Activated T-helper 1 cell treated with anti-CD3 and anti-CD28 coated beads, Interleukin-12 subunit alpha, Interleukin-12 subunit beta, Interleukin-2, Interleukin-4 antibody, amounts not matched to agents 30 ng/mL and 10 ng/mL and 1 ng/mL, durations not matched to agents 14 hours and 24 hours and 36 hours (primary cell): ENCODE measurements at regions of chr9 and their contacts with region 1.

Region 1: DNA sequence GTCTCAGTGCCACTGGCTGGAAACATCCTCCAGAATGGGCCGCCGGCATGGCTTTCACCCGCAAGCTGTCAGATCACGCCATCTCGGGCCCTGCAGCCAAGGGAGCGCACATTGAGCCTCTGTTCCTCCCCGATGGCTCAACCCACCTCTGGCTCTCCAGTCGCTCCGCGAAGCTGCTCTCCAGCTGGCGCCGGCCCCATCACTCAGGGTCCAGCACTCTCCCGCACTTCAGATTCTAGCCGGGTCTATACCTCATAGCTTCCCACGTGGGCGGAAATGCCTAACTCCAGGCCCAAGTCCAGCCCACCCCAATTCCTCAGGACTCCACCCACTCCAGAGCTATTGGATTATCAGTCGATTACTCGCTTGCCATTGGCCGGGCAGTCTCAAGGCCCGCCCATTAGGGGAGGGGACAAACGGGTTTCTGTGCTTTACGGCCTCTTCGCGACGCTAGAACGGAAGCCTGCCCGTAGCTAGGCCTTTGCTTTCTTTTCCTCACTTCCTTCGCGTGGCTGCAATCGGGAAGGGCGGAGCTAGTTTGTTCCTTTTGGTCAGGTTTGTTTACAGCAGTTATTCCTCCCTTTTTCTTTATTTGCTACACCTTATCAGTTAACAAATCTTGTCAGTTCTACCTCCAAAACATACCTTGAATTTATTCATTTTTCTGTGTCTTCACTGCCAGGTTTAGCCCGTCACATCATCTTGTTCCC is at the start of gene NOL6:
- DNase-seq: peak; percentile 98
- H3K4me3 Mint-ChIP-seq: peak within 1 kb of the TSS; percentile 98
- H3K27ac Mint-ChIP-seq: peak within 1 kb of the TSS; percentile 96
- H3K4me1 Mint-ChIP-seq: peaks cover 20% of the 10 kb centered on the region
- H3K27me3 Mint-ChIP-seq: no peaks in the 10 kb centered on the region
- total RNA-seq, gene NOL6: 87.3 and 90.1 TPM in 2 replicates

Region 2: GRCh38 chr9:33024966-33025571 is 448.7 kb before region 1 on chr9 and contains the start of gene DNAJA1:
- intact Hi-C with region 1: loop called (anchors 2 kb)
- DNase-seq: peak; percentile 95
- H3K4me3 Mint-ChIP-seq: peak within 1 kb of the TSS; percentile 94
- H3K27ac Mint-ChIP-seq: peak within 1 kb of the TSS; percentile 98
- H3K4me1 Mint-ChIP-seq: peaks cover 68% of the 10 kb centered on the region
- H3K27me3 Mint-ChIP-seq: no peaks in the 10 kb centered on the region
- total RNA-seq, gene DNAJA1: 296 and 312 TPM in 2 replicates

Region 3: DNA sequence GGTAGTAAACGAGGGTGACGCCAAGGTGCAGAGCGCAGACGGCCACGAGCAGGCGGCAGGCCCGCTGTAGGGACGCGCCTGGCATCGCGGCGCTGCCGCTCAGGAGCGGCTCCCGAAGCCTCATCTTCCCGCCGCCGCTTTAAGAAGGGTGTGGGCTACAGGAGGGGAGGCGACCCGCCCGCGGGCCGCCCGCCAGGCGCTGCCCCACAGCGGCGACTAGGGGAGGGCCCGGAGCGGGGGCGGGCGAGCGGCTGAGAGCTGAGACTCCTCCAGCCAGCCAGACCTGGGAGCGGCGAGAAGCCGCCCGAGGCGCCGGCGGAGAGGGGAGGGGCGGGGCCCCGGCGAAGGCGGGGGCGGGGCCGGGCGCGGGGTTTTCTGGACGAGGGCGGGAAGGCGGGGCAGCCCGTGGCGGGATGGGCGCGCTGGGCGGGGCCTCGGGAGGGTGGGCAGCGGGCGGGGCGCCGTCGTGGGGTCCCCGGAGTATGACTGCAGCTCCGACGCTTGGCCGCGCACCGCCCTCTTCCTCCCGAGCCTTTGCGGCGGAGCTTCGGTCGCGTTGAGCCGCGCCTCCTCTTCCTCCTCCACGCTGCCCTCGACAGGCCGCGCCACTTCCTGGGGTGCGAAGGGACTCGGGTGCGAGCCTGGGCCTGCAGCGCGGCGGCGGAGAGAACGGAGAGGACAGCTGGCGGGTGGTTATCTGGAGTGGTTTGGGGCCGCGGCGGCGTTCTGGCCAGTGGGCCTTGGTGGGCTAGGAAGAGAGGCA is 306.6 kb before region 1 on chr9 and contains the start of gene B4GALT1:
- intact Hi-C with region 1: loop called (anchors 2 kb)
- DNase-seq: peak; percentile 91
- H3K4me3 Mint-ChIP-seq: peak within 1 kb of the TSS; percentile 96
- H3K27ac Mint-ChIP-seq: peak within 1 kb of the TSS; percentile 98
- H3K4me1 Mint-ChIP-seq: peaks cover 71% of the 10 kb centered on the region
- H3K27me3 Mint-ChIP-seq: no peaks in the 10 kb centered on the region
- total RNA-seq, gene B4GALT1: 64.4 and 66.5 TPM in 2 replicates

Region 4: DNA sequence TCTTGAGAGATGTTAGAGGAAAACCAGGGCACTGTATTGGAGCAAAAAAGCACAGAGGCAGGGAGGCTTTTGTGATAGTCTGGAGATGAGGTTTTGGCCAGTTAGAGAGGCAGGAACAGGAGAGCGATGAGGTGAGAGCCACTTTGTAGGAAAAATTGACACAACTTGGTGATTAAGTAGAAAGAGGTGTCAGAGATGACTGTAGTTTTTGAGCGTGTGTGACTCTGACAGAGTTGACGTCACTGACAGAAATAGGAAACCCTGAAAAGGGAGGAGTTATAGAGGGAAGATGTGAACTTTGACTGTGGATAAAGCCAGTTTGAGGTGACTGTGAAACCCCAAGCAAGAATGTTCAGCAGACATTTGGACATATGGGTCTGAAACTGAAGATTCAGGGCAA is 167.8 kb before region 1 on chr9:
- intact Hi-C with region 1: loop called (anchors 1 kb)
- DNase-seq: peak; percentile 42
- H3K4me3 Mint-ChIP-seq: no peak overlapping the region
- H3K27ac Mint-ChIP-seq: no peak overlapping the region
- H3K4me1 Mint-ChIP-seq: peaks cover 9% of the 10 kb centered on the region
- H3K27me3 Mint-ChIP-seq: no peaks in the 10 kb centered on the region

Region 5: GRCh38 chr9:33430942-33431341 is 42.9 kb before region 1 on chr9:
- intact Hi-C with region 1: no loop called
- DNase-seq: no peak
- H3K4me3 Mint-ChIP-seq: no peak overlapping the region
- H3K27ac Mint-ChIP-seq: no peak overlapping the region
- H3K4me1 Mint-ChIP-seq: peaks cover 20% of the 10 kb centered on the region
- H3K27me3 Mint-ChIP-seq: no peaks in the 10 kb centered on the region

Region 6: GRCh38 chr9:33446946-33447798 is 26.6 kb before region 1 on chr9 and contains the start of gene AQP3:
- intact Hi-C with region 1: loop called (anchors 1 kb)
- DNase-seq: peak; percentile 72
- H3K4me3 Mint-ChIP-seq: peak within 1 kb of the TSS; percentile 93
- H3K27ac Mint-ChIP-seq: peak within 1 kb of the TSS; percentile 90
- H3K4me1 Mint-ChIP-seq: peaks cover 40% of the 10 kb centered on the region
- H3K27me3 Mint-ChIP-seq: no peaks in the 10 kb centered on the region
- total RNA-seq, gene AQP3: 3.4 and 6.1 TPM in 2 replicates

Region 7: DNA sequence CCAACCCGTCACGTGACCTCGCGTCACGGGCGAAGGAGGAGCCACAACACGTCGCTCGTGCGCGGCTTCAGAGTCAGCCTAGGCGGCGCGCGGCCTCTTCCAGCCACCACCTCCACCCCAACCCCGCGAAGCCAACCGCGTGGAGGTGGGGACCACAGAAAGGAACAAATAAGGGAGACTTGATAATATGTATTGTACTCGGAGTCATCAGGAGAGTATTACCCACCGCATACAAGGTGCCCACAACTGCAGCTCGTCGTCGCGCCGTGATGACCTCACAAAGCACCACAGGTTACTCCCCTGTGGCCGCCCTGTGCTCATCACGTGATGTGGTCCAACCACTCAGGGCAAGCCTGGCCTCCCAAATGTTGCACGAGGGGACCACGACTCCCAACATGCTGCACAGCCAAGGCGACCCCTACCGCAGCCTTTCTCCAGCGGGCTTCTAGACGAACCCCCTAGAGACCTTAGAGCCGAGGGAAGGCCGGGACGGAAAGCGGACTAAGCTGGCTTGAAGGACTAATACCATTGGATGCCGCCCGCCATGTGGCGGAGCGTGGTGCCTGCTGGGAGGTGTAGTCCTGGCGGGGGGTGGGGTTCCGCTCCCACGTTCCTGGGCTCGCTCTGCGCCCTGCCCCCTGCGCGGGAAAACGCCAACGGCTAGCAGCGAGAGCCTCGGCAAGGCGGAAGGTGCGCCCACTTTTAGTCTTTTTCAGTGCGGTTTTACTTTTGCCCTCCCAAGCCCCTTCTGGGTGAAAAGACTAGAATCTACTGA is 575.3 kb after region 1 on chr9:
- intact Hi-C with region 1: loop called (anchors 5 kb)
- DNase-seq: peak; percentile 94
- H3K4me3 Mint-ChIP-seq: peak overlapping the region; percentile 98
- H3K27ac Mint-ChIP-seq: peak overlapping the region; percentile 100
- H3K4me1 Mint-ChIP-seq: peaks cover 44% of the 10 kb centered on the region
- H3K27me3 Mint-ChIP-seq: no peaks in the 10 kb centered on the region

Region 8: GRCh38 chr9:34328987-34329832 is 855.4 kb after region 1 on chr9 and contains the starts of genes KIF24 and NUDT2:
- intact Hi-C with region 1: loop called (anchors 10 kb)
- DNase-seq: peak; percentile 96
- H3K4me3 Mint-ChIP-seq: peak within 1 kb of the TSS; percentile 96
- H3K27ac Mint-ChIP-seq: peak within 1 kb of the TSS; percentile 99
- H3K4me1 Mint-ChIP-seq: peaks cover 29% of the 10 kb centered on the region
- H3K27me3 Mint-ChIP-seq: no peaks in the 10 kb centered on the region
- total RNA-seq, gene KIF24: 5.8 and 6.1 TPM in 2 replicates
- total RNA-seq, gene NUDT2: 31.0 TPM in 2 replicates